Activated CD8-positive, alpha-beta memory T cell treated with anti-CD3 and anti-CD28 coated beads, Interleukin-2, amount 10 ng/mL, durations not matched to agents 7 days and 5 days (primary cell): ENCODE measurements at regions of chr2 and their contacts with region 1.

Region 1: GRCh38 chr2:231910771-231911170 is 15.4 kb downstream of the NPPC start:
- DNase-seq: no peak
- ATAC-seq: no peak
- H3K4me3 Mint-ChIP-seq: no peak overlapping the region
- H3K27ac Mint-ChIP-seq: no peak overlapping the region
- H3K4me1 Mint-ChIP-seq: peaks cover 16% of the 10 kb centered on the region
- H3K27me3 Mint-ChIP-seq: peaks cover 12% of the 10 kb centered on the region

Region 2: DNA sequence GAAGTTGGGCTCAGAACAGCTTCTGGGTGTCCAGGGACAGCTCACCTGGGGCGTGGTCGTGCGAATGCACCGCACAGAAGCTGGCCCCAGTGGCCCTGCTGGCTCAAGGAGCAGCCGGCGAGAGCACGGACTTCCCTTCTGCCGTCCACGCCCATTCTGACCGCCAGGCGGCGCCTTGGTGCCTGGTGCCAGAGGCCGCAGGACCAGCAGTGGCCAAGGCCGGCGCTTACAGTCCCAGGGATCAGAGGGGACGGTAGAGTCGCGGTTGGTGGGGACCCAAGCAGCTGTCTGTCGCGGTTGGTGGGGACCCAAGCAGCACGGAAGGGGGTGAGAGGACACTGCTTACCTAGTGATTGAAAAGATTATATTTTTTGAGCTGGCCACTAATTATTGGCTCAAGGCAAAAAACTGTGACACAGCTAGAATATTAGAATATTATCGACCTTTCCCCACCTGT is 10.3 kb before region 1 on chr2:
- CTCF ChIA-PET with region 1: interaction called, 12 read pairs
- DNase-seq: peak; percentile 67
- ATAC-seq: peak; percentile 75
- H3K4me3 Mint-ChIP-seq: no peak overlapping the region
- H3K27ac Mint-ChIP-seq: no peak overlapping the region
- H3K4me1 Mint-ChIP-seq: no peaks in the 10 kb centered on the region
- H3K27me3 Mint-ChIP-seq: peaks cover 8% of the 10 kb centered on the region

Region 3: DNA sequence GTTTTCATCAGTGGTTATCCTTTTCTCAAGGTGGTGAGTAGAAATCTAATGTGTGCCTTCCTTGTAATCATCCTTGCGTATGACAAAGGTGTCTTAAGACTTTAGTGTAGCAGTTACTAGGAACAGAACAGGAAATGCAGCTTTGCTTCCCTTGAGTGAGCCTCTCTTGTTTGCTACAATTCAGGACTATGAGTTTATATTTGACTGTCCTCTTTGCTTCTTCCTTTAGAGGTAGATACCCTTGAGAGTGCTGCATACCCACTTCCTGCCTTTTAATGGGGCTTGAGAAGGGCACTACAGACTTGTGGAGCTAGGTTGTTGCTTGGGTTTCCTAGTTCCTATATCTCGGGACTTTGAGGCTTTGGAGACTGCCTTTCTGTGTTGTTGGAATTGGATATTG is 861.8 kb after region 1 on chr2:
- CTCF ChIA-PET with region 1: no interaction called
- DNase-seq: peak; percentile 49
- ATAC-seq: peak; percentile 86
- H3K4me3 Mint-ChIP-seq: no peak overlapping the region
- H3K27ac Mint-ChIP-seq: peak overlapping the region; percentile 74
- H3K4me1 Mint-ChIP-seq: peaks cover 18% of the 10 kb centered on the region
- H3K27me3 Mint-ChIP-seq: no peaks in the 10 kb centered on the region